Posterior cingulate gyrus (tissue), 11 donors: ENCODE measurements at regions of chr18 and their contacts with region 1.

Region 1: GRCh38 chr18:9683407-9684396 is 24.4 kb upstream of the RAB31 start:
- DNase-seq: peak in 3 of 10 donors; percentile 30 to 57 (median 32)

Region 2: GRCh38 chr18:8969639-8970390 is 713.9 kb before region 1 on chr18:
- intact Hi-C with region 1: no loop called
- DNase-seq: no peak

Region 3: GRCh38 chr18:9827641-9828505 is 144.2 kb after region 1 on chr18:
- intact Hi-C with region 1: no loop called
- DNase-seq: no peak

Region 4: GRCh38 chr18:9913526-9914333 is 230.0 kb after region 1 on chr18 and contains the start of gene VAPA:
- intact Hi-C with region 1: loop called (anchors 10 kb)
- DNase-seq: peak; percentile 94 to 99 (median 98)

Region 5: DNA sequence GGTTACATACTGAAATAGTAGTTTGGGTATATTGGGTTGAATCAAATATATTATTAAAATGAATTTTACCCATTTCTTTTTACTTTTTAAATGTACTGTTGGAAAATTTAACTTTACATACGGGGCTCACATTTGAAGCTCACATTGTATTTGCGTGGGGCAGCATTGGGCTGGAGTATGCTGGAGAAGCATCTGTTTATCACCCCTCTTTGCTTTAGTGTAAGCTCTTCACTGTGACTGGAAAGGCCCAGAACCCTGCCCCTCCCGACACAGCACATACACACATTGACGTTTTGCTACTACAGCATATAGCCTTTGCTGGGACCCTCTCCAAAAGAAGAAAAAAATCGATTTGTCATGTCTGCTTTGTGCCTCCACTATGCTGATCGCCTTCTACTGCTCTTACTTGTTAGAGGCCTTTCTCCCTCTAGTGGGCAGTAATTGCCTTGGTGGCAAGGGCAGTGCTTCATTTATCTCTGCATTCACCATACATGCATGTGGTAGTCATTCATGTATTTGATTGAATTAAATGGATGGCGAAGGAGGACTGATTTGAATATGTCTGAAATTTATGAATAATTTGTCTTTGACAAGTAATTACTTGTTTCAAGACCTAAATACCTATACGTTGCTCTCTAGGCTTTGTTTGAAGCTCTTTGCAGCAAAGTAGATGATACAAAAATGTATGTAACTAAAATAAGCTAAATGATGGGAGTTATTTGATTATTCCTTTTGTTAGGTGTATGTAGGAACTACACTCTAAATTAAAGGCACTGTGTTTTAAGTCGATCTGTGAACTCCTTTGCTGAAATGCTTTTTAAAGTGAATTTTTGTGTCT is 267.5 kb after region 1 on chr18:
- intact Hi-C with region 1: loop called (anchors 10 kb)
- DNase-seq: peak in 2 of 10 donors; percentile 32 to 69